H1 (cell line): ENCODE measurements at regions of chr2 and their contacts with region 1.

Region 1: DNA sequence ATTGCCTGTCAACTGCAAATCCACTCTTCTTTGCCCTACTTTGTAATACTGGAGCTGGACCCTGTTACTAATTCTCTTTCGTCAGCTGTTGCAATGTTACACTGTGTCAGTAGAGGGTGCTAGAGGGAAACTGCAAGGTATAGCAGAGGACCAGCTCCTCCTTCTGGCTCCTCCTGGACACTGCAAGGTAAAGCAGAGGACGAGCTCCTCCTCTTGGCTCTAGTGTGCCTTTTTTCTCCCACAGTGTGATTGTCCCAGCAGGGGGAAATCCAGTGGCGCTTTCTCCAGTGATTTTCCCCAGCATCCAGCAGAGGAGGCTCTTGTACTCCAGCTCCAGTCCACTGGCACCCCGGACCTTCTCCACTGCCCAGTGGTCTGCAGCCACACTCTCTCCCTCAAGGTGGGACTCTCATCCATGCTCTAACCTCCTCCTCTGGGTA is 95.6 kb downstream of the CAPN13 start:
- DNase-seq: peak; percentile 68 to 93
- H3K4me3 ChIP-seq: no peak overlapping the region
- H3K27ac ChIP-seq: no peak overlapping the region
- H3K4me1 ChIP-seq: no peaks in the 10 kb centered on the region
- H3K27me3 ChIP-seq: no peaks in the 10 kb centered on the region
- CTCF ChIP-seq: peak; percentile 95 to 100 (median 100)
- EP300 ChIP-seq: no peak
- POLR2A ChIP-seq: no peak
- RAD21 ChIP-seq: peak; percentile 91 to 94

Region 2: GRCh38 chr2:30225131-30225762 is 486.4 kb before region 1 on chr2:
- CTCF ChIA-PET with region 1: interaction called, 12 read pairs
- POLR2A ChIA-PET with region 1: no interaction called
- DNase-seq: no peak
- H3K4me3 ChIP-seq: no peak overlapping the region
- H3K27ac ChIP-seq: no peak overlapping the region
- H3K4me1 ChIP-seq: no peaks in the 10 kb centered on the region; a peak in 1 of 7 replicates
- H3K27me3 ChIP-seq: peaks cover 3 to 11% (median 9%) of the 10 kb centered on the region in 4 experiments; a peak in 6 of 7 replicates
- CTCF ChIP-seq: no peak
- EP300 ChIP-seq: no peak
- POLR2A ChIP-seq: no peak
- RAD21 ChIP-seq: no peak

Region 3: DNA sequence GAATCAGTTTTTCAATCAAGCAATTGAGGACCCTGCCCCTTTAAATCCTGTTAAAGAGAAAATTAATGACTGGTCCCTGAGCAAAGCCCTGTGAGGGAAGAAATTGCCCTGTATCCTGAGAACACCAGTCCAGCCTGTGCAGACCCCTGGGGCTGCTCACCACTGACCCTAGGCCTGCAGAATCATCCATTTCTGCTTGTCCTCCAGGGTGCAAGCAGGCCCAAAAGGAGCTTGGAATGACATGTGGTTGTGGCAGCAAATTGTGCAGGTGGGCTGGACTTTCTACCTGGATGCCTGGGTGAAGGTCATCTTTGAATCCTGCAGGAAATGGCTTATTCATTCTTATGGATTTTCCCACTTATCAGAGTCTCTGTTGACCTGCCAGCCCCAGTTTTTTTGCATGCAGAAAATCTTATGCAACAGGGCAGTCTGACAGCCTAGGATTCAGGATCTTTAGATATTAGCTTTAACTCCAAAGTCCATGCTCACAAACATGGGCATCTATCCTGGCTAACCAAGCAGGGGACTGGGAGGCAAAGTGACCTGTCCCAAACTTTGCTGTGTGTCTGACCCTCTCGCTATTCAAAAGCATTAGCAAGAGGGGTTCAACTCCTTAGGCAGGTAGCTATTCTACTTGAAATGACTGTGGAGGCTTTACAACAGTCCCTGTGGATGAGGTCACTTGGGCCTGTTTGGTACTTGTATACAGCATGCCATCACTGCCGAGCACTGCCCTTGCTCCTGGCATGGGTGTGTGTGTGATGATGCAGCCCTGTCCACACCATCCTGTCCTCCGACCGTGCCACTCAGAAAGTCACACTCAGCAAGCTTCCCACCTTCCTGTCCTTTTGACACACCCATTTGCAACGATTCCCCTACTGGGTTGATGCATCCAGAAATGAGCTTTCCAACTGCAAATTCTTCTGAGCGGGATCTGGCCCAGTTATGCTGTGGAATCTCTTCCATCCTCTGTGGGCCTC is 10.3 kb after region 1 on chr2:
- CTCF ChIA-PET with region 1: interaction called, 58 read pairs
- POLR2A ChIA-PET with region 1: no interaction called
- DNase-seq: peak in 1 of 2 experiments; percentile 19
- H3K4me3 ChIP-seq: no peak overlapping the region
- H3K27ac ChIP-seq: no peak overlapping the region
- H3K4me1 ChIP-seq: no peaks in the 10 kb centered on the region
- H3K27me3 ChIP-seq: no peaks in the 10 kb centered on the region
- CTCF ChIP-seq: no peak
- EP300 ChIP-seq: no peak
- POLR2A ChIP-seq: no peak
- RAD21 ChIP-seq: no peak

Region 4: GRCh38 chr2:30756047-30756719 is 44.5 kb after region 1 on chr2:
- CTCF ChIA-PET with region 1: interaction called, 16 read pairs
- POLR2A ChIA-PET with region 1: no interaction called
- DNase-seq: no peak
- H3K4me3 ChIP-seq: no peak overlapping the region
- H3K27ac ChIP-seq: no peak overlapping the region
- H3K4me1 ChIP-seq: no peaks in the 10 kb centered on the region
- H3K27me3 ChIP-seq: no peaks in the 10 kb centered on the region
- CTCF ChIP-seq: no peak
- EP300 ChIP-seq: no peak
- POLR2A ChIP-seq: no peak
- RAD21 ChIP-seq: no peak

Region 5: GRCh38 chr2:30915486-30915885 is 203.8 kb after region 1 on chr2:
- CTCF ChIA-PET with region 1: interaction called, 12 read pairs
- POLR2A ChIA-PET with region 1: no interaction called
- DNase-seq: peak; percentile 17 to 72
- H3K4me3 ChIP-seq: no peak overlapping the region
- H3K27ac ChIP-seq: no peak overlapping the region
- H3K4me1 ChIP-seq: 0 out of 7 replicates have a peak, but pooled peaks cover 0 to 2% (median 0%) of the 10 kb centered on the region in 4 experiments
- H3K27me3 ChIP-seq: no peaks in the 10 kb centered on the region
- CTCF ChIP-seq: peak; percentile 75 to 88 (median 79)
- EP300 ChIP-seq: no peak
- POLR2A ChIP-seq: no peak
- RAD21 ChIP-seq: peak; percentile 74 to 81

Region 6: DNA sequence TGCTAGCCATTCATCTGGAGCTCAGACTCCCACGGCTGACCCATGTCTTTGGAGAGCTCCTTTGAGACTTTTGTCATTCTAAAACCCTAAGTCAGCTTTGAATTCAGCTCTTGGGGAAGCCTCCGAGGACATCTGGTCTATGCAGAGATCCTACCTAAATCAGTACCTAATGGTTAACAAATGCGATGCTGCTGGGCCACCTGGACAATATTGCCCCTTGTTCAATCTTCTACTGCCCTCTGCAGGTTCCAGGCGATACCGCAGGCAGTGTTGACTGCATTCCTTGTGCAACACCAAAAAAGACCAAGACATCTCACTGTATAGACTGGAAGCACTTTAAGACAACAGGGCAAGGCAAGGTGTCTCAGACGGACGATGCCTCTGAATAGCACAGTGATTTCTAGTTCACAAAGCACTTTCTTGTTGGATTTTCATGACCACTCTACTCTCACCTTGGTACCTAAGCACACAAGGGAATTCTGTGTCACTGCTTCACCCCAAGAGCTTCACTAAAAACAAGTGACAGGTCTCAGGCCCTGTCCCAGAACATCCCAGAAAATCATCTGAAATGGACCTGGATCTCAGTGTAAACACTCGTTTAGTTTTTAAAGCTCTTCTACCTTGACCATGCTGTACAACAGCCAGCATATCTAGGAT is 622.0 kb after region 1 on chr2:
- CTCF ChIA-PET with region 1: interaction called, 14 read pairs
- POLR2A ChIA-PET with region 1: no interaction called
- DNase-seq: peak; percentile 71 to 92
- H3K4me3 ChIP-seq: no peak overlapping the region
- H3K27ac ChIP-seq: no peak overlapping the region
- H3K4me1 ChIP-seq: peaks cover 0 to 6% (median 0%) of the 10 kb centered on the region in 4 experiments; a peak in 2 of 7 replicates
- H3K27me3 ChIP-seq: no peaks in the 10 kb centered on the region; a peak in 1 of 7 replicates
- CTCF ChIP-seq: peak; percentile 85 to 98 (median 95)
- EP300 ChIP-seq: no peak
- POLR2A ChIP-seq: no peak
- RAD21 ChIP-seq: peak; percentile 98 to 99